ENCODE measurements at regions of chr4 and their contacts with region 1.

Region 1: DNA sequence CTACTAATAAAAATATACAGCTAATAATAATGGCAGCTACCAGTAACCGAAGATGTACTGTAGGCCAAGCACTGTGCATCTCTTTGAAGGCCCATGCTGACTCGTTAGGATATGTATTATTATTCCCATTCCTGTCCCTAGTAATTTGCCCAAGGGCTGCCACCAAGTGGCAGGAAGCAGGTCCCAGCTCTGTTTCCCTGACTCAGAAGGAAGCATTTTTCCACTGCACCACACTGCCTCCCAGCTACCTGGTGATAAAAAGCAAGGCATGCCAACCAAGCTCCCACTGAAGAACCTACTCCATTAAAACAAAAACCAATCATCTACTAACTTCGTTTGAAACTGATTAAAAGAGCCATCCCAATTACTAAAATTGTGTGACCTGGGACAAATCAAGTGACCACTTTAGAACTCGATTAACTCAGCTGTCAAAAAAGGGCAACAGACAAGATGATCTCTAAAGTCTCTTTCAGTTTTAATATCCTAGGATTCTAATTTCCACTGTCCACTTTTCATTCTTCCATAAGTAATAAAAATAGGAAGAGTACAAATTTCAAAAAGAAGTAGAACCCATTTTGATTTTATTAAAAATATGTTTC is 24.3 kb upstream of the PGM2 start:
- DNase-seq: no peak
- ATAC-seq: no peak
- H3K4me3 ChIP-seq: no peak overlapping the region
- H3K4me3 Mint-ChIP-seq: no peak overlapping the region
- H3K27ac ChIP-seq: no peak overlapping the region
- H3K27ac Mint-ChIP-seq: no peak overlapping the region
- H3K4me1 ChIP-seq: no peaks in the 10 kb centered on the region
- H3K4me1 Mint-ChIP-seq: no peaks in the 10 kb centered on the region
- H3K27me3 ChIP-seq: peaks cover 0 to 3% of the 10 kb centered on the region in 2 experiments
- H3K27me3 Mint-ChIP-seq: peaks cover 3 to 4% of the 10 kb centered on the region in 2 donors

Region 2: DNA sequence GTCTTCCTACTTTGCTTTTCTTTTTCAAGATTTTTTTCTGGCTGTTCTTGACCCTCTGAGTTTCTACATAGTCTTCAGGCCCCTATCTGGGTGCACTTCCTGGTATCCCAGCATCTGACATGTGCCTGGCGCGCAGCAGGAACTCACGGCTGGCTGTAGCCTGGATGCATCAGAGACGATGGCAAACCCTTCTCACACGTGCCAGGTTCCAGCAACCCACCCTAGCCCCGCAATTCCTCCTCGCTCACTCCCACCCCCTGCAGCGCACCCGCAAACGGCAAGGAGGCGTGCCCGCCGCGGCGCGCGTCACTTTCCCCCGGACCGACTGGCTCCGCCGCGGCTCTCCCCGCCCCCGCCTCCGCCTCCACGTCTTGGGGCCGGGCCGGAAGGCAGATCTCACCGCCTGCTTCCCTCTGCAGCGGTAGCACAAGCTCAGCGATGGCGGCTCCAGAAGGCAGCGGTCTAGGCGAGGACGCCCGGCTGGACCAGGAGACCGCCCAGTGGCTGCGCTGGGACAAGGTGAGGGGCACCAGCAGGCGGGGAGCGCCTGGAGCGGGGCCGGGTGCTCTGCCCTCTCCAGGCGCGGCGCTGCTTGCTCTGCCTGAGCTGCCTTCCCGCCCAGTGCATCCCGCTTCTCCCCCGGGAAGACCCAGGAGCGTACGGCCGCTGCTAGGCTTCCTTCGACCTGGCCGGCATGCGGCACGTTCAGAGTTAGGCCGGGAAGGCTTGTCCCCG is 24.3 kb after region 1 on chr4 and contains the start of gene PGM2:
- CTCF ChIA-PET with region 1: interaction called in 1 of 2 experiments, 10 read pairs
- POLR2A ChIA-PET with region 1: no interaction called
- DNase-seq: peak; percentile 77 to 93 (median 88)
- ATAC-seq: peak; percentile 99 to 100 (median 99)
- H3K4me3 ChIP-seq: peak within 1 kb of the TSS; percentile 85 to 89
- H3K4me3 Mint-ChIP-seq: peak within 1 kb of the TSS; percentile 95 to 97 (median 95)
- H3K27ac ChIP-seq: peak within 1 kb of the TSS; percentile 60
- H3K27ac Mint-ChIP-seq: peak within 1 kb of the TSS; percentile 83 to 97
- H3K4me1 ChIP-seq: peaks cover 11 to 16% of the 10 kb centered on the region in 2 experiments
- H3K4me1 Mint-ChIP-seq: peaks cover 42 to 47% (median 43%) of the 10 kb centered on the region in 3 donors
- H3K27me3 ChIP-seq: no peaks in the 10 kb centered on the region
- H3K27me3 Mint-ChIP-seq: no peaks in the 10 kb centered on the region
- total RNA-seq, gene PGM2: 13.8 to 18.2 (median 16.6) TPM

Region 3: DNA sequence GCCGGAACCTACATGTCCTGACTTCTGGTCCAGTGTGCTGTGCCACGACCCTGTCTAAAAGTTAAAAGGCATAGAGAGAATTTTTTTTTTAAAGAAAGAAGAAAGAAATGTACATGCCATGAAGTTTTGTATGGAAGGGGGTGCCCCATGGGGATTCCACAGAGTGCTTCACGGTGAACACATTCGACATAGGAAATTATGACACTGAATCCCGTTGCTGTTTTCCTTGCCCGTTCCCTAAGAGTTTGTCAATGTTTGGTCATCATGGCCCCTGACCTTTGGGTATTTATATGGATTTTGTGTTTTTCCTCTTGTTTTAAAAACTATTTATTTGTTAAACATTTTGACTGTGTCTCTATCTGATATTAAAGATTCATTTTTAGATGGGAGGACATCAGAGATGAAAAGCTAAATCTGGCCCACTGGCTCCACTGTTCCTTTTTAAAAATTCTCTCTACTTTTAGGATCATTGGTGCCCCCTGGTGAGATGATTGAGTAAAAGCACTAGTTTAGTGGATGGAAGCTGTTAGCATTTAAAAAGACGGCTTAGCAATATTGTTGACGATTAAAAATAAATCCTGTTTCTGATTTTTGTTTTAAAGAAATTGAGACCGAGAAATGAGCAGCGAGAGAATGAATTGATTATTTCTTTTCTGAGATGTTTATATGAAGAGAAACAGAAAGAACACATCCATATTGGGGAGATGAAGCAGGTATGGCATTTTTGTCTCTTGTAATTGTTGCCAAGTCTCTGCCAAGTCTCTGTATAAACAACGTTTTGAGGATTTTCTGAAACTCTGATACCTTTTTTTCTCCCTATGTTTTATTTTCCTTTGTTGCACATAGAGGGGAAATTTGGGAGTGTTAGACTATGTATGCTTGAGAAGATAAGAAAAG is 233.1 kb after region 1 on chr4:
- CTCF ChIA-PET with region 1: interaction called, 13 to 24 read pairs
- POLR2A ChIA-PET with region 1: no interaction called
- DNase-seq: peak in 24 of 35 experiments; percentile 4 to 76 (median 22)
- ATAC-seq: peak; percentile 29 to 66 (median 41)
- H3K4me3 ChIP-seq: no peak overlapping the region
- H3K4me3 Mint-ChIP-seq: no peak overlapping the region
- H3K27ac ChIP-seq: no peak overlapping the region
- H3K27ac Mint-ChIP-seq: no peak overlapping the region
- H3K4me1 ChIP-seq: no peaks in the 10 kb centered on the region
- H3K4me1 Mint-ChIP-seq: peaks cover 0 to 1% (median 0%) of the 10 kb centered on the region in 3 donors
- H3K27me3 ChIP-seq: no peaks in the 10 kb centered on the region
- H3K27me3 Mint-ChIP-seq: no peaks in the 10 kb centered on the region